Calu3 (cell line): ENCODE measurements at regions of chr2 and their contacts with region 1.

Region 1: GRCh38 chr2:63698825-63699548 is 110.2 kb downstream of the MDH1 start:
- DNase-seq: peak; percentile 23
- H3K4me3 Mint-ChIP-seq: no peak overlapping the region
- H3K27ac Mint-ChIP-seq: peak overlapping the region; percentile 30
- H3K4me1 Mint-ChIP-seq: peaks cover 19% of the 10 kb centered on the region
- H3K27me3 Mint-ChIP-seq: no peaks in the 10 kb centered on the region
- CTCF ChIP-seq: peak; percentile 48

Region 2: DNA sequence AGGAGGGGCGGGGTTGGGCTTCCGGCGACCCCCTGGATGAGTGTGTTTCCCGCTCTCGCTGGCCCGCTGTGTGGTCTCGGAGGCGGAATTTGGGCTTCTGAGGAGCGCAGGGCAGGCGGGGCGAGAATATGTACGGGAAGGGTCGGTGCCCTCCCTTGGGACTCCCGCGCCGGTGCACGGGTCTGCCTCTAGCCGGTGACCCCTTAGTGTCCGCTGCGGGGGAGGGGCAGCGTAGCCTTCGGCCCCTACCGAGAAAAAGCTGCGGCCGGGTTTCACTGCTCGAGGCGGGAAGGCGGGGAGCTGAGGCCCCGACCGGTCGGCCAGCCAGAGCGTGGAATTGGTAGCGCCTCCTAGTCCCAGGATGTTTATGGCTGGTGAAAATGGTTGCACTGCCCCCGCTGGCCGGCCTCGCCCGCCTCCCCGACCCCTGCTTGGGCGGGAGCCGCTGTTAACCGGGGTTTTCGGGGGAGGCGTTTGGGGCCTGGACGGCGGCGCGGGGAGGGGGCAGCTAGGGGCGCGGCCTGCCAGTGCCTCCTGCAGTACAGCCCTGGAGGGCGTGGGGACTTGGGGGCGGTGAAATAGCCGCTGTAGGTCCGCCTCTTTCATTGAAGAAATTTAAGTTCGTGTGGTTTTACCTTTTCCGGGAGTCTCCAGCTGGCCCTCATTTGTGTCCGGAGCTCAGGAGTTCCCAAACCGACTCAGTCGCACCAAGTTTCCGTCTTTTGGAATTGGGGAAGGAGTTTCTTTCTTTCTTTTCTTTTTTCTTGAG is 142.5 kb after region 1 on chr2 and contains the start of gene UGP2:
- CTCF ChIA-PET with region 1: interaction called, 9 read pairs
- intact Hi-C with region 1: loop called (anchors 2 kb)
- DNase-seq: peak; percentile 89
- H3K4me3 Mint-ChIP-seq: peak within 1 kb of the TSS; percentile 91
- H3K27ac Mint-ChIP-seq: peak within 1 kb of the TSS; percentile 91
- H3K4me1 Mint-ChIP-seq: peaks cover 33% of the 10 kb centered on the region
- H3K27me3 Mint-ChIP-seq: no peaks in the 10 kb centered on the region
- CTCF ChIP-seq: no peak
- total RNA-seq, gene UGP2: 120 and 134 TPM in 2 replicates

Region 3: GRCh38 chr2:63861220-63861822 is 162.3 kb after region 1 on chr2:
- CTCF ChIA-PET with region 1: interaction called, 15 read pairs
- intact Hi-C with region 1: loop called (anchors 1 kb)
- DNase-seq: peak; percentile 51
- H3K4me3 Mint-ChIP-seq: no peak overlapping the region
- H3K27ac Mint-ChIP-seq: peak overlapping the region; percentile 54
- H3K4me1 Mint-ChIP-seq: peaks cover 44% of the 10 kb centered on the region
- H3K27me3 Mint-ChIP-seq: no peaks in the 10 kb centered on the region
- CTCF ChIP-seq: peak; percentile 38

Region 4: GRCh38 chr2:64019719-64020528 is 320.9 kb after region 1 on chr2:
- CTCF ChIA-PET with region 1: no interaction called
- intact Hi-C with region 1: loop called (anchors 10 kb)
- DNase-seq: peak; percentile 7
- H3K4me3 Mint-ChIP-seq: peak overlapping the region; percentile 91
- H3K27ac Mint-ChIP-seq: peak overlapping the region; percentile 98
- H3K4me1 Mint-ChIP-seq: peaks cover 22% of the 10 kb centered on the region
- H3K27me3 Mint-ChIP-seq: no peaks in the 10 kb centered on the region
- CTCF ChIP-seq: no peak